ENCODE measurements at regions of chr2 and their contacts with region 1.

Region 1: GRCh38 chr2:190511104-190511503 is 23.4 kb downstream of the NEMP2 start:
- DNase-seq: no peak
- ATAC-seq: no peak
- H3K4me3 ChIP-seq: no peak overlapping the region
- H3K4me3 Mint-ChIP-seq: no peak overlapping the region
- H3K27ac ChIP-seq: no peak overlapping the region
- H3K27ac Mint-ChIP-seq: peak overlapping the region in 4 of 9 donors; percentile 1 to 64 (median 43)
- H3K4me1 ChIP-seq: peaks cover 8 to 10% of the 10 kb centered on the region in 2 donors
- H3K4me1 Mint-ChIP-seq: peaks cover 7 to 36% (median 26%) of the 10 kb centered on the region in 7 donors
- H3K27me3 ChIP-seq: no peaks in the 10 kb centered on the region
- H3K27me3 Mint-ChIP-seq: no peaks in the 10 kb centered on the region

Region 2: GRCh38 chr2:190367091-190367490 is 144.0 kb before region 1 on chr2:
- CTCF ChIA-PET with region 1: no interaction called
- POLR2A ChIA-PET with region 1: no interaction called
- intact Hi-C with region 1: no loop called
- DNase-seq: no peak
- ATAC-seq: no peak
- H3K4me3 ChIP-seq: no peak overlapping the region
- H3K4me3 Mint-ChIP-seq: no peak overlapping the region
- H3K27ac ChIP-seq: no peak overlapping the region
- H3K27ac Mint-ChIP-seq: no peak overlapping the region
- H3K4me1 ChIP-seq: no peaks in the 10 kb centered on the region
- H3K4me1 Mint-ChIP-seq: peaks cover 0 to 13% (median 3%) of the 10 kb centered on the region in 7 donors
- H3K27me3 ChIP-seq: no peaks in the 10 kb centered on the region
- H3K27me3 Mint-ChIP-seq: no peaks in the 10 kb centered on the region

Region 3: GRCh38 chr2:190451561-190452176 is 59.4 kb before region 1 on chr2:
- CTCF ChIA-PET with region 1: no interaction called
- POLR2A ChIA-PET with region 1: no interaction called
- intact Hi-C with region 1: loop called in 1 of 2 experiments (anchors 5 kb)
- DNase-seq: no peak
- ATAC-seq: no peak
- H3K4me3 ChIP-seq: no peak overlapping the region
- H3K4me3 Mint-ChIP-seq: peak overlapping the region in 2 of 10 donors; percentile 4 to 5
- H3K27ac ChIP-seq: no peak overlapping the region
- H3K27ac Mint-ChIP-seq: peak overlapping the region in 1 of 9 donors; percentile 36
- H3K4me1 ChIP-seq: no peaks in the 10 kb centered on the region
- H3K4me1 Mint-ChIP-seq: peaks cover 9 to 65% (median 55%) of the 10 kb centered on the region in 7 donors
- H3K27me3 ChIP-seq: no peaks in the 10 kb centered on the region
- H3K27me3 Mint-ChIP-seq: no peaks in the 10 kb centered on the region

Measured in naive thymus-derived CD4-positive, alpha-beta T cell (primary cell).